ENCODE measurements at regions of chr19 and their contacts with region 1.

Region 1: GRCh38 chr19:30227661-30228428 is 144.3 kb upstream of the ZNF536 start:
- DNase-seq: peak; percentile 55
- H3K4me3 Mint-ChIP-seq: peak overlapping the region; percentile 3
- H3K27ac Mint-ChIP-seq: no peak overlapping the region
- H3K4me1 Mint-ChIP-seq: peaks cover 20% of the 10 kb centered on the region
- H3K27me3 Mint-ChIP-seq: peaks cover 61% of the 10 kb centered on the region

Region 2: GRCh38 chr19:30374865-30375552 is 147.2 kb after region 1 on chr19:
- intact Hi-C with region 1: loop called (anchors 10 kb)
- DNase-seq: no peak
- H3K4me3 Mint-ChIP-seq: no peak overlapping the region
- H3K27ac Mint-ChIP-seq: no peak overlapping the region
- H3K4me1 Mint-ChIP-seq: no peaks in the 10 kb centered on the region
- H3K27me3 Mint-ChIP-seq: peaks cover 23% of the 10 kb centered on the region

Region 3: DNA sequence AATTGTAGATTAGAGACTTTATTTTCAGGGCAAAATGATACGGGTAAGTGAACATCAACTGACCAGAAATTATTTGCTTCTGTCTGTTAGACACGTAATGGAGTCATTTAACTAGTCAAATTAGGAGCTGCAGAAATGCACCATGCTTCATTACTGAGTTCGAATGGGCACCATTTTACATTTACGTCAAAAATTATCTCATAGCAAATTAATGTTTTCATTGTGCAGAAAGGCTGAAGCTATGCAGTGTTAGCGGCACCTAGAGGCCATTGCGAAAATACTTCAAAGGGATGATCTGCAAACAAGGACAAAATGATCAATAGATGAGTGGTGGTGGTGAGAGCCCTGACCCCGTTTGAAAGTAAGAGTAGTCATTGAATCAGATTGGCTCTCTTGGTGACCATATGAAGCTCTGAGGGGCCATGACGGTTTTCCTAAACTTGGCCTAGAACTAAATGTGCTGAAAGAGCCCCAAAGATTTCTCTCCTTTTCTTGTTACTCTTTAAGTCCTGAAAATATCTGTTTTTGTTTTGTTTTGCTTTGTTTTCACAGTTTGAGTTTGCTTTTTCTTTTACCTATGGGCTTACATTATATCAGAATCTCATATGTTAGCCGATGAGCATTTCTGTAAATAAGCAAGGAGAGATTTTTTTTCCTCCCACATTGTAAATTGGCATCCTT is 422.2 kb after region 1 on chr19:
- intact Hi-C with region 1: loop called (anchors 5 kb)
- DNase-seq: peak; percentile 8
- H3K4me3 Mint-ChIP-seq: no peak overlapping the region
- H3K27ac Mint-ChIP-seq: no peak overlapping the region
- H3K4me1 Mint-ChIP-seq: no peaks in the 10 kb centered on the region
- H3K27me3 Mint-ChIP-seq: peaks cover 4% of the 10 kb centered on the region

Measured in activated T-helper 1 cell treated with anti-CD3 and anti-CD28 coated beads, Interleukin-12 subunit alpha, Interleukin-12 subunit beta, Interleukin-2, Interleukin-4 antibody, amounts not matched to agents 30 ng/mL and 10 ng/mL and 1 ng/mL, durations not matched to agents 14 hours and 24 hours and 36 hours (primary cell).